ENCODE measurements at regions of chr20 and their contacts with region 1.

Region 1: GRCh38 chr20:41693136-41693979 is 75.2 kb upstream of the CHD6 start:
- DNase-seq: peak; percentile 68 to 97 (median 78)

Region 2: DNA sequence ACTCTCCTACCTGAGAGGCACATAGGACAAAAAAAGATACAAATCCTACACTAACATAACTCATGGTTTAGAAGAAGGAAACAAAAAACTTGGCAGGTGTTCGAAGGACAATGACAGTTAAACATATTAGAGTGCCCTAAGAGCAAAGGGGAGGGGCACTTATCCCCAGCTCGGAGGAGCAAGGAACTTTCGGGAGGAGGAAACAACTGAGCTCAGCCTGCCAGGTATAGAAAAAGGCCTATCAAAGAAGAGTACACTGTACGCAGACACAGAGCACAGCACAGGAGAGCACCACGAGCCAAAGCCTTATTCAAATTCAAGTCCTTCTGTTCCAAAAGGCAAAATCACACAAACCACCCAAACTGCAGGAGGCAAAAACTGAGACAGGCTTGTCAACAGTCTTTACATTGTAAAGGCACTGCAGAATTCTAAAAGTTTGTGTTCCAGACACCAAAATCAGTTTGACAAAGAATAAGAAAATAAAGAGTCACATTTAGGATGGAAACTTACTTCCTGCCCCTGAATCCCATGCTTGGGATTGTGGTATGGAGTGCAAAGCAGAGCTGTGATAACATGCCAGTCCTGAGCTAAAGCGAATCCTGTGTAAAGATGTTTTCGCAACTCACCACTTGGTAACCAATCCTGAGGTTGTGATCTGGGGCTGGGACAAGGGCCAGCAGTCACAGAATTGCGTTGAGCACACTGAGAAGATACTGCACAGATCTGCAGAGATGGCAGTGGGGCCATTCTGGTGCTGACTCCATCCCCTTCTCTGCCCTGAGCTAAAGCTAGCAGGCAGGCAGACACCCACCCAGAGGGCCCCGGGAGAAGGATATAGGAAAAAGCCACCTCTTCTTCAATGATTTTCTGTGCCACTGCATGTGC is 183.8 kb before region 1 on chr20:
- intact Hi-C with region 1: no loop called
- DNase-seq: peak in 1 of 10 donors; percentile 71

Region 3: DNA sequence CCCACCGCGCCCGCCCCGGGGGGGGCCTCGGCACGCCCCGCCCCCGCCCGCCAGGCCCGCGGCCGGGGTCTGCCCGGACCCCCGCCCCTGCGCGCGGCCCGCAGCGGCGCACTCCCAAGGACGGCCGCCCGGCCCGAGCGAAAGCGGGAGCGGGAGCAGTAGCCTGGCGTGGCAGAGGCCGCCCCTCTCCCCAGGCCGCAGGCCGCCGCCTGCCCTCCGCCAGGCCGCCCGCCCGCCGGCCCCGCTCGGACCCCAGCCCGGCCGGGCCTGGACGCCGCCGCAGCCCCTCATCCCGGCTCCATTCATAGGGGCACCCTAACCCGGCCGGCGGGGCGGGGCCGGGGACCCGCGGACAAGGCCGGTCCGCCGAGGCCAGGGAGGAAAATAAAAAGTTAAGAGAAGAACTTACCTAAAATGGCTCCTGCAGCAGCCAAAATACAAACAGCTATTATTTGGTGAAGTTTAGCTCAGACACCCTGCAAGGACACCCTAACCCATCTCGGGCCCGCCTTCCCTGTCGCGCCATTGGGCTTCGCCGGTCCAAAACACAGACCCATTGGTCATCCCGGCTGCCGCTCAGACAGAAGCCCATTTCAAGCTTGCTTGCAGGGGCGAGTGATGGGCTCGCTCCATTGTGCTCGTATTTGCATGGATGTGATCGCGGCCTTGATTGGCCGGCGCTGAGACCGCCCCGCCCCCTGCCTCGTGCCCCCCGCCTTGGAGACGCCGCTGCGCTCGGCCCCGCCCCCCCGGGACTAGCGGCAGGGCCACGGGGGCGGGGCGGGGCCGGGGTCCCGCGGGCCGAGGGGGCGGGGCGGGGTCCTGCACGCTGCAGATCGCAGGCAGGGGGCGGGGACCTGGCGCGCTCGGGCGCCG is 75.2 kb before region 1 on chr20 and contains the start of gene CHD6:
- intact Hi-C with region 1: loop called (anchors 5 kb)
- DNase-seq: peak; percentile 98 to 100 (median 100)